ENCODE measurements at regions of chr17 and their contacts with region 1.

Region 1: GRCh38 chr17:41648411-41649195 is 24.2 kb upstream of the KRT17 start:
- DNase-seq: peak; percentile 70 to 97 (median 86)

Region 2: GRCh38 chr17:41548844-41549595 is 99.6 kb before region 1 on chr17:
- intact Hi-C with region 1: loop called (anchors 1 kb)
- DNase-seq: peak; percentile 59 to 95 (median 80)

Measured in posterior cingulate gyrus (tissue), 11 donors.